HCT116 (cell line): ENCODE measurements at regions of chr12 and their contacts with region 1.

Region 1: GRCh38 chr12:55789893-55790292 is 27.6 kb downstream of the SARNP start:
- DNase-seq: no peak
- ATAC-seq: no peak
- H3K4me3 ChIP-seq: no peak overlapping the region
- H3K27ac ChIP-seq: no peak overlapping the region
- H3K4me1 ChIP-seq: no peaks in the 10 kb centered on the region
- H3K27me3 ChIP-seq: no peaks in the 10 kb centered on the region
- CTCF ChIP-seq: no peak
- POLR2A ChIP-seq: no peak
- RAD21 ChIP-seq: no peak

Region 2: GRCh38 chr12:55771736-55772135 is 18.2 kb before region 1 on chr12:
- CTCF ChIA-PET with region 1: no interaction called
- POLR2A ChIA-PET with region 1: no interaction called
- RAD21 ChIA-PET with region 1: no interaction called
- intact Hi-C with region 1: loop called (anchors 2 kb)
- DNase-seq: no peak
- ATAC-seq: no peak
- H3K4me3 ChIP-seq: no peak overlapping the region
- H3K27ac ChIP-seq: no peak overlapping the region
- H3K4me1 ChIP-seq: no peaks in the 10 kb centered on the region
- H3K27me3 ChIP-seq: no peaks in the 10 kb centered on the region
- CTCF ChIP-seq: no peak
- POLR2A ChIP-seq: no peak
- RAD21 ChIP-seq: no peak